CD4-positive, alpha-beta T cell (primary cell): ENCODE measurements at regions of chr11 and their contacts with region 1.

Region 1: DNA sequence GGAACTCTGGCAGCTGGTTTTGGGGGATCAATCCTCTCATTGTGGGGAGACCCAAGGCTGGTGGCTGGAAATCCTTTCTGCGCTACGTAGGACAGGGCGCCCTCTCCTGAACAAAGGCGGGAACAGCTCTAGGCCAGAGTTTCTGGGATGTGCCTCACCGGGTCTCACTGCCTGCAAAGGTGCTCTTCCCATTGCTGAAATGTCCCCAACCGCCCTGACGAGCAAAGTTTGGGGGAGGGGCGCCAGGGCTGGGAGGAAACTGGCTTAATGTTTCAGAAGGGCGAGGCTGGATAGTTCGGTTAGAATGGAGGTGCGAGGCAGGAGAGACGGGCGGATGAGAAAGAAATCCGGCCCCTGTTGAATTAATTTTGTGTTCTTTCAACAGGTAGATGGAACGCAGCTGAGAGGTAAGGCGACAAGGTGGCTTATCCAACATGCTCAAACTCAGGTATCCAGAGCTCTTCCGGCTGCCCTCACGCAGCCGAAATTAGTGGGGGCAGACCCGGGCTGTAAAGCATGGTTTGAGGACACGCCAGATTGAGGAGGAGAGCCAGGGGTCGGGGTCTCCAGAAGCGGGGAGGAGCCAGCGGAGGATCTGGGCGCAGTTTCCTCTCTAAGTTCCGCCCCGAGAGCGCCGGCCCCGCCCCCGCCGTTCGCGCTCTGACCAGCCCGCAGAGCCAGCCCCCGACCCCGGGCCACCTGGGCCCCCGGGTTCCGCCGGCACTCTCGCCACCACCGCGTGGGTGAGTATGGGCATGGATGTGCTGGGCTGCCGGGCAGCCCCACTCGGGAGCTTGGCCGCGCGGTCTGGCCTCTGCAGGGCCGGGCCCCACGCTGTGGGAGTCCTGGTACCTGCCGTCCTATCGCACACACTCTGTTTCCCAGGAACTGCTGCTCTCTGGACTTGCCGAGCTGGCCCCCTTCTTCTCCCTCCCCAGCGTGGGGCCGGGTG is at the start of gene PGAP2:
- DNase-seq: peak; percentile 27 to 77 (median 52)
- ATAC-seq: peak; percentile 74
- H3K4me3 ChIP-seq: peak within 1 kb of the TSS; percentile 96
- H3K4me3 Mint-ChIP-seq: peak within 1 kb of the TSS; percentile 95
- H3K27ac ChIP-seq: peak within 1 kb of the TSS in 1 of 2 donors; percentile 76
- H3K27ac Mint-ChIP-seq: peak within 1 kb of the TSS; percentile 84
- H3K4me1 ChIP-seq: peaks cover 21% of the 10 kb centered on the region
- H3K4me1 Mint-ChIP-seq: peaks cover 24% of the 10 kb centered on the region
- H3K27me3 ChIP-seq: no peaks in the 10 kb centered on the region
- H3K27me3 Mint-ChIP-seq: no peaks in the 10 kb centered on the region
- CTCF ChIP-seq: peak; percentile 63
- total RNA-seq, gene PGAP2: 20.9 to 23.6 TPM

Region 2: GRCh38 chr11:3767536-3767935 is 40.6 kb before region 1 on chr11:
- CTCF ChIA-PET with region 1: interaction called, 10 read pairs
- POLR2A ChIA-PET with region 1: interaction called, 3 read pairs
- intact Hi-C with region 1: loop called in 1 of 2 experiments (anchors 5 kb)
- DNase-seq: no peak
- ATAC-seq: no peak
- H3K4me3 ChIP-seq: no peak overlapping the region
- H3K4me3 Mint-ChIP-seq: no peak overlapping the region
- H3K27ac ChIP-seq: no peak overlapping the region
- H3K27ac Mint-ChIP-seq: no peak overlapping the region
- H3K4me1 ChIP-seq: no peaks in the 10 kb centered on the region
- H3K4me1 Mint-ChIP-seq: no peaks in the 10 kb centered on the region
- H3K27me3 ChIP-seq: no peaks in the 10 kb centered on the region
- H3K27me3 Mint-ChIP-seq: no peaks in the 10 kb centered on the region
- CTCF ChIP-seq: no peak

Region 3: GRCh38 chr11:3781423-3781822 is 26.8 kb before region 1 on chr11:
- CTCF ChIA-PET with region 1: interaction called, 37 read pairs
- POLR2A ChIA-PET with region 1: interaction called, 12 read pairs
- intact Hi-C with region 1: loop called in 1 of 2 experiments (anchors 1 kb)
- DNase-seq: peak in 2 of 14 experiments; percentile 51 to 61
- ATAC-seq: no peak
- H3K4me3 ChIP-seq: no peak overlapping the region
- H3K4me3 Mint-ChIP-seq: no peak overlapping the region
- H3K27ac ChIP-seq: no peak overlapping the region
- H3K27ac Mint-ChIP-seq: peak overlapping the region; percentile 47
- H3K4me1 ChIP-seq: peaks cover 27% of the 10 kb centered on the region
- H3K4me1 Mint-ChIP-seq: peaks cover 50% of the 10 kb centered on the region
- H3K27me3 ChIP-seq: no peaks in the 10 kb centered on the region
- H3K27me3 Mint-ChIP-seq: no peaks in the 10 kb centered on the region
- CTCF ChIP-seq: no peak

Region 4: DNA sequence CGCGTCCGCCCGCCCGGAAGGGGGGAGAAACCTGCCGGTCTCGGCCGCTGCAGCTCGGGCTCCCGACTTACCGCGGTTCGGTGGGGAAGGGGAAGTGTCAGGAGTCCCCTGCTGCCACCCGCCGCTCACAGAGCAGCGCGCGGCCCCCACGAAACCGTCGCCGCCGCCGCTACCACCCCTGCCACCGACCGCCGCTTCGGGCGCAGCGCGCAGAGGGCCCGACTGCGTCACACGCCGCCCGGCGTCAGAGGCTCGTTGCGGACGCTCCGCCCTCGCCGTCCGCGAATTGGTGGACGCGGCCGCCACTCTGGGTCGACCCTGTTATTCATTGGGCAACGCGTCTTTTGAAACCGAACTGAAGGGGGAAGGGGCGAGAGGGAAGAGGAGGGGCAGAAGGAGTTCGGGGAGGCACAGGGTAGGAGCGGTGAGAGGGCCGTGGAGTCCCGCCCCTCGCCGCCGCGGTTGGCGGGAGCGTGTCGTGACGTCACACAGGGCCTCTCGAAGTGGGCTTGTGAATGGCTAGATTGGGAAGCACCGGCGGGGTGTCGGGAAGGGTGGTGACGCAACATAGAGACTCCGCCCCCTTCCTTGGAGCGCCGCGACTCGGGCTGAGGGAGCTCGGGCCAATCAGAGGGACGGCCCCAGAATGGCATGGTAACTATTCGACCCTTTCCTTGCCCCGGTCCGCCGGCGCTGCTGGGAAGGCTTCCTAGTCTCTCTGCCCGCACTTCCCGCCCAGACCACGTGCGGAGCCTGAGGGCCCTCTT is 10.7 kb before region 1 on chr11 and contains the start of gene NUP98:
- CTCF ChIA-PET with region 1: interaction called, 33 read pairs
- POLR2A ChIA-PET with region 1: interaction called, 76 read pairs
- intact Hi-C with region 1: loop called (anchors 1 kb)
- DNase-seq: peak; percentile 98 to 100 (median 99)
- ATAC-seq: peak; percentile 93
- H3K4me3 ChIP-seq: peak within 1 kb of the TSS; percentile 98
- H3K4me3 Mint-ChIP-seq: peak within 1 kb of the TSS; percentile 89
- H3K27ac ChIP-seq: peak within 1 kb of the TSS; percentile 95
- H3K27ac Mint-ChIP-seq: peak within 1 kb of the TSS; percentile 97
- H3K4me1 ChIP-seq: peaks cover 37% of the 10 kb centered on the region
- H3K4me1 Mint-ChIP-seq: peaks cover 46% of the 10 kb centered on the region
- H3K27me3 ChIP-seq: no peaks in the 10 kb centered on the region
- H3K27me3 Mint-ChIP-seq: no peaks in the 10 kb centered on the region
- CTCF ChIP-seq: no peak
- total RNA-seq, gene NUP98: 161 to 186 TPM

Region 5: GRCh38 chr11:3841426-3842350 is 33.5 kb after region 1 on chr11:
- CTCF ChIA-PET with region 1: interaction called, 23 read pairs
- POLR2A ChIA-PET with region 1: interaction called, 78 read pairs
- intact Hi-C with region 1: no loop called
- DNase-seq: peak; percentile 85 to 98 (median 92)
- ATAC-seq: peak; percentile 72
- H3K4me3 ChIP-seq: peak overlapping the region; percentile 95
- H3K4me3 Mint-ChIP-seq: peak overlapping the region; percentile 97
- H3K27ac ChIP-seq: peak overlapping the region; percentile 95 to 97
- H3K27ac Mint-ChIP-seq: peak overlapping the region; percentile 95
- H3K4me1 ChIP-seq: peaks cover 40% of the 10 kb centered on the region
- H3K4me1 Mint-ChIP-seq: peaks cover 61% of the 10 kb centered on the region
- H3K27me3 ChIP-seq: no peaks in the 10 kb centered on the region
- H3K27me3 Mint-ChIP-seq: no peaks in the 10 kb centered on the region
- CTCF ChIP-seq: peak; percentile 92

Region 6: DNA sequence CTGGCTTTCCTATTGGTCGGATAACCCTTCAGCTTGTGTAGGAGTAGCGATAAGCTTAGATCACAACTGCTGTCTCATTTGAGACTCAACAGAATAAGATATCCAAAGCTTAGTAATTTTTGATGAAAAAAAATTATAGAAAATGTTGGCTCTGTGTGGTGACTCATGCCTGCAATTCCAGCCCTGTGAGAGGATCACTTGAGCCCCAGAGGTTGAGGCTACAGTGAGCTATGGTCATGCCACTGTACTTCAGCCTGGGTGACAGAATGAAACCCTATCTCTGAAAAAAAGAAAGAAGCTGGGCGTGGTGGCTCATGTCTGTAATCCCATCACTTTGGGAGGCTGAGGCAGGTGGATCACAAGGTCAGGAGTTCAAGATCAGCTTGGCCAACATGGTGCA is 230.8 kb after region 1 on chr11:
- CTCF ChIA-PET with region 1: no interaction called
- POLR2A ChIA-PET with region 1: no interaction called
- intact Hi-C with region 1: no loop called
- DNase-seq: no peak
- ATAC-seq: no peak
- H3K4me3 ChIP-seq: no peak overlapping the region
- H3K4me3 Mint-ChIP-seq: no peak overlapping the region
- H3K27ac ChIP-seq: no peak overlapping the region
- H3K27ac Mint-ChIP-seq: no peak overlapping the region
- H3K4me1 ChIP-seq: no peaks in the 10 kb centered on the region
- H3K4me1 Mint-ChIP-seq: peaks cover 61% of the 10 kb centered on the region
- H3K27me3 ChIP-seq: no peaks in the 10 kb centered on the region
- H3K27me3 Mint-ChIP-seq: no peaks in the 10 kb centered on the region
- CTCF ChIP-seq: no peak

Region 7: GRCh38 chr11:4072668-4073285 is 264.6 kb after region 1 on chr11:
- CTCF ChIA-PET with region 1: interaction called, 11 read pairs
- POLR2A ChIA-PET with region 1: no interaction called
- intact Hi-C with region 1: no loop called
- DNase-seq: peak in 9 of 14 experiments; percentile 19 to 87 (median 48)
- ATAC-seq: peak; percentile 78
- H3K4me3 ChIP-seq: no peak overlapping the region
- H3K4me3 Mint-ChIP-seq: no peak overlapping the region
- H3K27ac ChIP-seq: no peak overlapping the region
- H3K27ac Mint-ChIP-seq: peak overlapping the region; percentile 69
- H3K4me1 ChIP-seq: peaks cover 27% of the 10 kb centered on the region
- H3K4me1 Mint-ChIP-seq: peaks cover 84% of the 10 kb centered on the region
- H3K27me3 ChIP-seq: no peaks in the 10 kb centered on the region
- H3K27me3 Mint-ChIP-seq: no peaks in the 10 kb centered on the region
- CTCF ChIP-seq: peak; percentile 80